ENCODE measurements at regions of chr15 and their contacts with region 1.

Region 1: GRCh38 chr15:78131295-78132061 is at the start of gene CIB2:
- DNase-seq: peak; percentile 86
- H3K4me3 ChIP-seq: peak within 1 kb of the TSS; percentile 80
- H3K27ac ChIP-seq: no peak within 1 kb of the TSS
- H3K4me1 ChIP-seq: peaks cover 8% of the 10 kb centered on the region
- CTCF ChIP-seq: peak; percentile 75
- total RNA-seq, gene CIB2: 2.2 and 5.0 TPM in 2 replicates

Region 2: DNA sequence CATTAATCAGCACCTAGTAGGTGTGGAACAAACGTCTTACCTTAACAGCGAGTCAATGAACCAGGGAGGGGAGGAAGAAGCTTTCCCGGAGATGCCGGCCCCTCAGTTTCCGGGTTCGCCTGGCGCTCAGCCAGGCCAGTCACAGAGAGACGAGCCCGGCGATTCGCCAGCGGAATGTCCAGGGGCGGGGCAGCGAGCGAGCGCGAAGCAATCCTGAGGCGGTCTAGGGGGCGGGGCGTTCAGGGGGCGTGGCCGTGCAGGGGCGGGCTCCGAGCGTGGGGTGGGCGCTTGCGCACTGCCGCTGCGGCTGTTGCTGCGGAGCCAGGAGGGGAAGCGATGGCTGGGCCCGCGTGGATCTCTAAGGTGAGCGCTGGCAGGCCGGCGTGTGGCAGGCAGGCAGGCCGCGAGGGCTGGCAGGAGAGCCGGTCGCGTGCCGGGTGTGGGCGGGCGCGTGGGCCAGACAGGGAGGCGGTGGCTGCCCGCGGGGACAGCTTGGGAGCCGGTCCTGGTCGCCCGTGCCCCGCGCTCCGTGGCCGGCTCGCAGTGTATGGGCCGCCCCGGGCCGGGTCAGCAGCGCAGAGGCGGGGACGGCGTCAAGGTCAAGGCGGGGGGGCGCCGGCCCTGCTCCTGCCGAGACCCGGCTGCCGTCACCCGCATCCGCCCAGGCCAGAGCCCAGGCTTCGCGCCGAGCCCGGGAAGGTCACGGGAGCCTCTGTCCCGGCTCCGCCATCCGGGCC is 17.8 kb after region 1 on chr15 and contains the start of gene IDH3A:
- CTCF ChIA-PET with region 1: no interaction called
- POLR2A ChIA-PET with region 1: interaction called, 3 read pairs
- intact Hi-C with region 1: loop called (anchors 1 kb)
- DNase-seq: peak; percentile 97
- H3K4me3 ChIP-seq: peak within 1 kb of the TSS; percentile 88
- H3K27ac ChIP-seq: peak within 1 kb of the TSS; percentile 34
- H3K4me1 ChIP-seq: peaks cover 34% of the 10 kb centered on the region
- CTCF ChIP-seq: no peak
- total RNA-seq, gene IDH3A: 47.0 and 84.6 TPM in 2 replicates

Region 3: DNA sequence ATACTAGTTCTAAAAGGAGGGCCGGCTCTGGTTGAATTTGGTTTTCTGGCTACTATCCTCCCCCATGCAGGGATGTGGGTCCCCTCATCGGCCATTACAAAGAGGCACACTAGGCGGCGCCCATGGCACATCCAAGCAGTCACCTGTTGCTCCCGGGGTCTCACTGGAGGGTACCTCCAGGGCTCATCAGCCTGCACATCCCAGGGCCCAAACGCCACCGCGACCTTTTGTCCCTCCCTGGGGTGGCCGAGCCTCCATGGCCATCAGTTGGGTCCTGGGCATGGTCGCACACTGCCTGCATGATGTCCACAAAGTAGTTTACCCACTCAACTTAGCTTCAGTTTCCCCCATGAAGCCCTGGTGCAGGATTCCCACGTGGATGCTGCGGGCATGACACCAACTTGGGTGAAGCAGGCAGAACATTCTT is 46.0 kb after region 1 on chr15:
- CTCF ChIA-PET with region 1: no interaction called
- POLR2A ChIA-PET with region 1: no interaction called
- intact Hi-C with region 1: loop called (anchors 1 kb)
- DNase-seq: peak; percentile 62
- H3K4me3 ChIP-seq: no peak overlapping the region
- H3K27ac ChIP-seq: no peak overlapping the region
- H3K4me1 ChIP-seq: peaks cover 27% of the 10 kb centered on the region
- CTCF ChIP-seq: peak; percentile 84

Measured in OCI-LY7 (cell line).